AG04449 (cell line): ENCODE measurements at regions of chr17 and their contacts with region 1.

Region 1: DNA sequence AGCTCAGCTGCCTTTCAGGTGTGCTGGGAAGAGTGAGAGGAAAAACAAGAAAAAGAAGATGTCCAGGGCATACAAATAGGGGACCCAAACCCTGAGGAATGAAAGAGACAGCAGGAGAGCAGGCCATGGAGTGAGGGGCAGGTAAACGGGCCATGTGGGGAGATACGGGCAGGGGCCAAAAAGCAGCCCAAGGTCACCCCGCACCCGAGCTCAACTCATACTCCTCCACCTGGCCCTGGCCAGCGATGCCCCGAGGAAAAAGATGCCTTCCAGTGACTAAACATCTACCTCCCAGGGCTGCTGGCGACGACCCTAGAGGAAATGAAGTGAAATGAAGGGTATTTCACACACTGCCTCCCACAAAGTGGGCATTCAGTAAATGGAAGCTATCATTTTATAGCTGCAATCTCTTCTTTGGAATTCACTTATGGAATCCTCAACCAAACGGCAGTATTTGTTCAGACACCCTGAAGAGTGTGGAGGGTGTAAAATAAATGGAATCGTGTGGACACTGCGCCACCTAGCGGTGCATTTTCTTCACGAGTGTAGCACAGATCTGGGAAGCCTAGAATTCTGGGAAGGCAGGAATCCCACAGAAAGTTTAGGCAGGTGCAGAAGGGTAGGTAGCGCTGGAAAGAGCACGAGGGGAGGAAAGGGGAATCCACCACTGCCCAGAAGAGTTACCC is 14.9 kb downstream of the ELAC2 start:
- DNase-seq: peak; percentile 40
- H3K4me3 ChIP-seq: no peak overlapping the region
- CTCF ChIP-seq: peak; percentile 68

Region 2: DNA sequence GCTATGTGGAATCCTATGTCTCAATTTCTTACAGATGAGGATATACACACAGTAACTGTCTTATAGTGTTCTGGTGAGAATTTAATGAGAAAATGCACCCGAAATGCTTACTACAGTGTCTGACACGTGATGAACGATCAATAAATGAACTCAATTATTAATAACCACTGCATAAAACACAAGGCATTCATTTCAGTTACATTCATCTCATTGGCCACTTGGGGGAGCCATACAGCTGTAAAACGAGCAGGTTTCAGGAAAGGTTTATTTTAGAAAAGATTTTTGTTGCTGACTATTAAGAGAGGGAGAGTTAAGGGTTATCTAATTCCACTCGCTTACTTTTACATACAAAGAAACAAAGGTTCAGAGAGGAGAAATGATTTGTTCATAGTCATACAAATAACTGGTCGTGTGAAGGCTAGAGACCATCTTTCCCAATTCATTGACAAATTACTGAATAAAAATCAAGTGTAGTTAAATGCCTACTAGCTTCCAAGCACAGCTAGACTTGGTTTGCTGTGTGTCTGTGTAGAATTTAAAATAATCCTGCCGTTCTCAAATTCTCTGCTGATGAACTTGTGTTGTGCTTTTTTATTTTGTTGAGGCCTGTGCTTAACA is 822.2 kb before region 1 on chr17:
- CTCF ChIA-PET with region 1: interaction called, 86 read pairs
- POLR2A ChIA-PET with region 1: no interaction called
- DNase-seq: peak; percentile 24
- H3K4me3 ChIP-seq: no peak overlapping the region
- CTCF ChIP-seq: peak; percentile 46

Region 3: DNA sequence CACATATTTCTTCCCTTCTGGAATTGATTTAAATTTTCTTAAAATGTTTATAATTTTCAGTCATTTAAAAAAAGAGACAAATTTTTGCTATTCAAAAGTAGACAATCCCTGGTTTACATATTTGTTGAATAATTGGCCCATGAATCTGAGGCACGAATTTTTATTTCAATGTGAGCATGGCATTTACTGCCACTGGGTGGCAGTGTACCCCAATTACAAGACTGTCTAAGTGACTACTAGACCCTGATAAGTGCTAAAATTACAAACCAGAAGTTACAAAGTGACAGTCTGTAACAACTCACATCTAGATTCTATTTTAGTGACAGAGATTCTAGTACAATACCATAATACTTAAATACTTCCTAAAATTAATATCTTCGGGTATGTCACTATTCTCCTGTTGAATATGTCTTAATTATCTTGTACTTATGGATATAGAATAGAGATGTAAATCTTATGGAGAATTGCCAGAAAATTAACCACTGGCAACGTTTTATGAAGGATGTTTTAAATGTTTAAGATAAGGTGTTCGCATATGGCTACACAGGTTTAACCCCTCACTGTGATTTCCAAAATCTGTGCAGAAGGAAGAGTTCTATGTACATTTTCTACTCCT is 746.4 kb before region 1 on chr17:
- CTCF ChIA-PET with region 1: interaction called, 15 read pairs
- POLR2A ChIA-PET with region 1: no interaction called
- DNase-seq: peak; percentile 53
- H3K4me3 ChIP-seq: no peak overlapping the region
- CTCF ChIP-seq: peak; percentile 47

Region 4: GRCh38 chr17:12667299-12667958 is 335.5 kb before region 1 on chr17:
- CTCF ChIA-PET with region 1: interaction called, 13 read pairs
- POLR2A ChIA-PET with region 1: no interaction called
- DNase-seq: peak; percentile 45
- H3K4me3 ChIP-seq: peak overlapping the region; percentile 73
- CTCF ChIP-seq: peak; percentile 55

Region 5: DNA sequence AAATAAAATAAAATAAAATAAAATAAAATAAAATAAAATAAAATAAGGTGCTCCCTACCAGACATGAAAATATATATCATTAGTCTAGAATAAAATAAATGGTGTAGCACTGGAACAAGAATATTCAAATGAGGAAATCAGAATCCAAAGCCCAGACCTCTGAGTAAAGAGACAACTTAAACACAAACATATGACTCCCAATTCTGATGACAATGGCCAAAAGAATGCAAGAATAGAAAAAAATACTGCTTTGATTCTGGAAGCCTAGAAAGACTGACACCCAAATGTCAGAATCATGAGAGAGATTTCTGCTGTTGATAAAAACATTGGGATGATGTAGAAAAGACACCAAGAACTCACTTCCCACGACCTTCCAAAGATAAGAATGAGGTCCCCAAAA is 309.3 kb before region 1 on chr17:
- CTCF ChIA-PET with region 1: interaction called, 10 read pairs
- POLR2A ChIA-PET with region 1: no interaction called
- DNase-seq: no peak
- H3K4me3 ChIP-seq: no peak overlapping the region
- CTCF ChIP-seq: no peak

Region 6: DNA sequence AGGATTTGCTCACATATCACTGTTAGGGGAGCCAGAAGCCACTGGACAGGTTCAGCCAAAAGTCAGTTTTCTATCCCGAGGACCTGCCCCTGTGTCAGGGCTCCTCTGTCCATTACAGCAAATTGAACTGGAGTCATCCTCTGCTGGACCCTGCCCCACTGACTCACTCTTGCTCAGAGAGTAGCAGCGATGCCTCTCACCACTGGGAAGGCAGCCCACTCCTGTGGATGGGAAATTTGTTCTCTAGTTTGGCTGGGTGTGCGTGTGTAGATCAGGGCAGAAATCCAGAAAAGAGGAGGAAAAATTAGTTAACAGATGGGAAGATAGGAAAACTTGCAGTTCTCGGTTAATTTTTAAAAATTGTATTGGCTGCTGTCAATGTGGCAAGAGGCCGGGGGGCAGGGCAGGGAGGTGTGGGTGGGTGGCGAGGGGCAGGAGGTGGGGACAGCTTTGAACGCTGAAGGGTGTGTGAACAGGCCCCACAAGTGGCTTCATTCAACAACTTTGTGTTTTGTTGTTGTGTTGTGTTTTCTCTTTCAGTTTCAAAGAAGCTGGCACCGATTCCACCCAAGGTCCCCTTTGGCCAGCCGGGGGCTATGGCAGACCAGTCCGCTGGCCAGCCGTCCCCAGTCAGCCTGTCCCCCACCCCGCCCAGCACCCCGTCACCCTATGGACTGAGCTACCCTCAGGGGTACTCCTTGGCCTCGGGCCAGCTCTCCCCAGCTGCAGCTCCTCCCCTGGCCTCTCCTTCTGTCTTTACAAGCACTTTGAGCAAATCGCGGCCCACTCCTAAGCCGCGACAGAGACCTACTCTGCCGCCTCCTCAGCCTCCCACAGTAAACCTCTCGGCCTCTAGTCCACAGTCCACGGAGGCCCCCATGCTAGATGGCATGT is 18.7 kb before region 1 on chr17:
- CTCF ChIA-PET with region 1: interaction called, 69 read pairs
- POLR2A ChIA-PET with region 1: no interaction called
- DNase-seq: peak; percentile 59
- H3K4me3 ChIP-seq: no peak overlapping the region
- CTCF ChIP-seq: no peak

Region 7: GRCh38 chr17:13017659-13018459 is 14.9 kb after region 1 on chr17 and contains the start of gene ELAC2:
- CTCF ChIA-PET with region 1: interaction called, 73 read pairs
- POLR2A ChIA-PET with region 1: interaction called, 5 read pairs
- DNase-seq: peak; percentile 96
- H3K4me3 ChIP-seq: peak within 1 kb of the TSS; percentile 82
- CTCF ChIP-seq: no peak